ENCODE measurements at regions of chr15 and their contacts with region 1.

Region 1: DNA sequence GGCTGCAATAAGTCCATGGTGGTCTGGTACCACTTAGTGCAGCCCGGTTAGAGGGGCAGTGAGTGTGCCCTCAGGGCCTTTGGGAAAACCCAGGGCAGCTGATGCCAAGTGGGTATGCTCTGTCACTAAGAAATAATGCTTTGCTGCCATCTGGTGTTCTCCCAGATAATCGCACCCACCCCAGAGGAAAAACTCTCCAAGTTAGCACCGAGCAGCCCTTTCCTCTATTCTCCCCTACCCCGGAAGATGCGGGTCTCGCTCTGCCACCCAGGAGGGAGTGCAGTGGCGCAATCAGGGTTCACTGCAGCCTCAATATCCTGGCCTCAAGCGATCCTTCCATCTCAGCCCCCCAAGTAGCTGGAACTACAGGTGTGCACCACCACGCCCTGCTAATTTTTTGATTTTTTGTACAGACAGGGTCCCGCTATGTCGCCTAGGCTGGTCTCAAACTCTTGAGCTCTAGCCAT is 21.3 kb upstream of the DAPK2 start:
- DNase-seq: peak; percentile 44 to 69 (median 66)
- H3K4me3 ChIP-seq: no peak overlapping the region
- H3K27ac ChIP-seq: no peak overlapping the region
- H3K4me1 ChIP-seq: peaks cover 7% of the 10 kb centered on the region
- H3K27me3 ChIP-seq: no peaks in the 10 kb centered on the region
- CTCF ChIP-seq: peak; percentile 67 to 71 (median 70)
- EP300 ChIP-seq: no peak
- POLR2A ChIP-seq: no peak

Region 2: DNA sequence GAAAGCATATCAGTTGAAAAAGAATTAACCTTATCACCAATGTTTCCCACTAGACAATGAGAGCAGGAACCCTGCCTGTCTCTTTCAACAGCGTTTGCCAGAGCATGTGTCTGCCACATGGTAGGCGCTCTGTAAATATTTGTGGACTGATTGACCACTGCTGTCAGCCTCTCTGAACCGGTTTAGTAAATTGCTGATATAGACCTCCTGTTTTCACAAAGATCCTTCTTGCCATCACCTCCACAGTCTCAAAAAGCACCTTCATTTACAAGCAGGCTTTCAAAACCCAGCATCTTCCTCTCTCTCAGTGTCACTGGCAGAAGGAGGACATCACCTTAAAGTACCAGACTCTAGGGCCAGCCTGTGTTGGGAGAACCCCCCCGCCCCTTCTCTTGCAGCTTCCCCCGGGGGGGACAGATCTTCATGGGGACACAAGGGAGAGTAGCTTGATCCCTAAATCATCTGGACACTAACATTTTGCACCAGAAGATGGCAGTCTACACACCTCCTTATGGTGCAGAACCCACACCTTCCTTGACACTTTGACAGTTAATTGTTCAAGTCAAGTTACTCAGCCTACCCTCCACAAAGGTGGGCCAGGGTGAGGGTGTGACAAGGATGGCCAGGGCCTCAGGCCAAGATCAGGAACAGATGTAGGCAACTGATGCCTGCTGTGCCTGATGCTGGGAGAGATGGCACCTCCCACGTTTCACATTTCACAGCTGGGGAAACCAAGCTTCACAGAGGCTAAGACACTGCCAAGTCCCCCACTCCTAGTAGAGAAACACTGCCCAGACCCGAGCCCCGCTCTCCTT is 601.0 kb before region 1 on chr15:
- intact Hi-C with region 1: loop called in 1 of 4 experiments (anchors 10 kb)
- DNase-seq: peak in 1 of 5 donors; percentile 24
- H3K4me3 ChIP-seq: no peak overlapping the region
- H3K27ac ChIP-seq: no peak overlapping the region
- H3K4me1 ChIP-seq: no peaks in the 10 kb centered on the region
- H3K27me3 ChIP-seq: no peaks in the 10 kb centered on the region
- CTCF ChIP-seq: peak; percentile 24 to 50 (median 49)
- EP300 ChIP-seq: no peak
- POLR2A ChIP-seq: no peak

Region 3: GRCh38 chr15:63626955-63627354 is 440.6 kb before region 1 on chr15:
- intact Hi-C with region 1: loop called in 1 of 4 experiments (anchors 10 kb)
- DNase-seq: no peak
- H3K4me3 ChIP-seq: no peak overlapping the region
- H3K27ac ChIP-seq: no peak overlapping the region
- H3K4me1 ChIP-seq: no peaks in the 10 kb centered on the region
- H3K27me3 ChIP-seq: no peaks in the 10 kb centered on the region
- CTCF ChIP-seq: no peak
- EP300 ChIP-seq: no peak
- POLR2A ChIP-seq: no peak

Region 4: GRCh38 chr15:64355944-64356709 is 288.5 kb after region 1 on chr15 and contains the start of gene CSNK1G1:
- intact Hi-C with region 1: no loop called
- DNase-seq: peak; percentile 95 to 96 (median 95)
- H3K4me3 ChIP-seq: peak within 1 kb of the TSS; percentile 63
- H3K27ac ChIP-seq: peak within 1 kb of the TSS in 1 of 2 donors; percentile 54
- H3K4me1 ChIP-seq: peaks cover 2% of the 10 kb centered on the region
- H3K27me3 ChIP-seq: no peaks in the 10 kb centered on the region
- CTCF ChIP-seq: peak; percentile 20 to 52 (median 25)
- EP300 ChIP-seq: no peak
- POLR2A ChIP-seq: no peak
- total RNA-seq, gene CSNK1G1: 8.3 to 23.9 (median 14.8) TPM